OCI-LY7 (cell line): ENCODE measurements at regions of chr1 and their contacts with region 1.

Region 1: GRCh38 chr1:26730695-26731094 is 34.9 kb downstream of the ARID1A start:
- DNase-seq: no peak
- H3K4me3 ChIP-seq: no peak overlapping the region
- H3K27ac ChIP-seq: no peak overlapping the region
- H3K4me1 ChIP-seq: no peaks in the 10 kb centered on the region
- CTCF ChIP-seq: no peak

Region 2: GRCh38 chr1:26459573-26460031 is 271.1 kb before region 1 on chr1:
- CTCF ChIA-PET with region 1: no interaction called
- POLR2A ChIA-PET with region 1: no interaction called
- intact Hi-C with region 1: no loop called
- DNase-seq: no peak
- H3K4me3 ChIP-seq: no peak overlapping the region
- H3K27ac ChIP-seq: no peak overlapping the region
- H3K4me1 ChIP-seq: no peaks in the 10 kb centered on the region
- CTCF ChIP-seq: no peak

Region 3: GRCh38 chr1:26705788-26706311 is 24.8 kb before region 1 on chr1:
- CTCF ChIA-PET with region 1: no interaction called
- POLR2A ChIA-PET with region 1: interaction called, 11 read pairs
- intact Hi-C with region 1: no loop called
- DNase-seq: peak; percentile 43
- H3K4me3 ChIP-seq: peak overlapping the region; percentile 20
- H3K27ac ChIP-seq: peak overlapping the region; percentile 44
- H3K4me1 ChIP-seq: peaks cover 67% of the 10 kb centered on the region
- CTCF ChIP-seq: no peak

Region 4: DNA sequence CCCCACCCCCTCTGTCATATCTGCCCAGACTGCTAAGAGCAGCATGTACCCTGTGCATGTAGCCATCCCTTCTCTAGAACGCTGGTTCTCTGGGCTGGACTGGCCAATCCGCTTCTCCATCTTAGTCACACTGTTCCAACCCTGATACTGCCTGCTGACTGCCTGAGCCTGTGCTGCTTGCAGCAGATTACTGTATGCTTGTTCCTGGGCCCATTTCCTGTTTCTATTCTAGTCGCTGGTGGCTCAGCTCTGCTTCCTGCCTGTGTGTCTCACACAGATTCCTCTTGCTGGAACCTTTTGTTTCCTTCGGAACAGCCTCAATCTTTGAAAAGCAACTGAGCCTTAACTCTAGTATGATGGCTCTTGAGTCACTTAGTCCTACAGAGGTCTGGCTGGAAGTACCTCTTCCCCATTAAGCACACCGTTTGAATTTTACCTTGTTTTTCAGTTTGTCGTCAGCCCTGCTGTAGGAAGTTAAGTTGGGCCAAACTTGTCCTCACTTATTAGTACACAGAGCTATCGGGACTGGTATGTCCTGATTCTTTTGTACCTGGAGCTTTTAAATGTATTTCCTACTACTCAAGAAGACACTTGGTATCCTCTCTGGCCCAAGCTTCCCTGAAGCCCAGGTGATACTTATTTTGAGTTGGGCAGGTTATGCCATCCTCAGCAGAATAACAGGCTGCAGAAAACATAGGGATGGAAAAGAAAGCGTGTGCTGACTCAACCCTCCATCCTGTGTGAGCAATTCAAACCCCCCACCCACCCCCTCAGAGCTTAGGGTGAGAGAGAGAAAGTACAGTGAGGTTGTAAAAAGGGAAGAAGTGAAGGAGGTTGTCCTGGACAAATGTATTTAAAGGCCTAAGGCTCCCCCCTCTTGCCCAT is 13.6 kb after region 1 on chr1:
- CTCF ChIA-PET with region 1: interaction called, 3 read pairs
- POLR2A ChIA-PET with region 1: interaction called, 21 read pairs
- intact Hi-C with region 1: no loop called
- DNase-seq: peak; percentile 97
- H3K4me3 ChIP-seq: peak overlapping the region; percentile 61
- H3K27ac ChIP-seq: peak overlapping the region; percentile 96
- H3K4me1 ChIP-seq: peaks cover 60% of the 10 kb centered on the region
- CTCF ChIP-seq: no peak